ENCODE measurements at regions of chr1 and their contacts with region 1.

Region 1: DNA sequence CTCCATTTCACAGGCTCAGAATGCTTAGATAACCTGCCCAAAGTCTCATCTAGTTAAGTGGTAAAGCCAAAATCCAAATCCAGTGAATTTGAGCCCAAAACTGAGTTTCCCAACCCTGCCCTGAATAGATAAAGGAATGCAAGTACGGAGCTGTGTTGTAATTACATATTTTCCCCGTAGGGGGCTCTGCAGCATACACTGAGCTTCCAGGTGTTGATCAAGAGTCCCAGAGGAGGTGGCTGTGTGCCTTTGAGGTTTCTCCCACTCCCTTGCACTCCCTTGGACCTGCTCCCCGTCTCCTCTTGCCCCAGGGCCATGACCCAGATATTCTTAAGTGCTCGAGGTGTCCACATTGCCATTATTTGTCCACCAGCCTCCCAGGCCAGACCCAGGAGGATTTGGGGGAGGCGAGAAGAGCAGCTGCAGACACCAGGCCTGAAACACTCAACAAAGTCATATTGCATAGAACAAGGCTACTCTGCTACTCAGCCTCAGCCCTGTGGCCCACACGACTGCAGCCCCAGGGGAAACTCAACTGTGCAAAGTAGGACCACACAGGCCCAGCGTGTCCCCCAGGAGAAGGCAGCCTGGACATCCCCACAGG is 18.4 kb upstream of the LY9 start:
- DNase-seq: peak; percentile 72
- ATAC-seq: no peak
- H3K4me3 ChIP-seq: no peak overlapping the region
- H3K4me3 Mint-ChIP-seq: no peak overlapping the region
- H3K27ac ChIP-seq: no peak overlapping the region
- H3K27ac Mint-ChIP-seq: peak overlapping the region; percentile 76
- H3K4me1 ChIP-seq: peaks cover 45 to 58% of the 10 kb centered on the region in 2 donors
- H3K4me1 Mint-ChIP-seq: peaks cover 83% of the 10 kb centered on the region
- H3K27me3 ChIP-seq: no peaks in the 10 kb centered on the region
- H3K27me3 Mint-ChIP-seq: no peaks in the 10 kb centered on the region
- CTCF ChIP-seq: peak; percentile 72

Region 2: GRCh38 chr1:160681067-160681890 is 96.3 kb before region 1 on chr1:
- CTCF ChIA-PET with region 1: interaction called, 18 read pairs
- POLR2A ChIA-PET with region 1: no interaction called
- intact Hi-C with region 1: no loop called
- DNase-seq: peak; percentile 89
- ATAC-seq: peak; percentile 93
- H3K4me3 ChIP-seq: no peak overlapping the region
- H3K4me3 Mint-ChIP-seq: no peak overlapping the region
- H3K27ac ChIP-seq: peak overlapping the region in 1 of 2 donors; percentile 82
- H3K27ac Mint-ChIP-seq: peak overlapping the region; percentile 72
- H3K4me1 ChIP-seq: peaks cover 38 to 45% of the 10 kb centered on the region in 2 donors
- H3K4me1 Mint-ChIP-seq: peaks cover 51% of the 10 kb centered on the region
- H3K27me3 ChIP-seq: no peaks in the 10 kb centered on the region
- H3K27me3 Mint-ChIP-seq: no peaks in the 10 kb centered on the region
- CTCF ChIP-seq: peak; percentile 92

Region 3: DNA sequence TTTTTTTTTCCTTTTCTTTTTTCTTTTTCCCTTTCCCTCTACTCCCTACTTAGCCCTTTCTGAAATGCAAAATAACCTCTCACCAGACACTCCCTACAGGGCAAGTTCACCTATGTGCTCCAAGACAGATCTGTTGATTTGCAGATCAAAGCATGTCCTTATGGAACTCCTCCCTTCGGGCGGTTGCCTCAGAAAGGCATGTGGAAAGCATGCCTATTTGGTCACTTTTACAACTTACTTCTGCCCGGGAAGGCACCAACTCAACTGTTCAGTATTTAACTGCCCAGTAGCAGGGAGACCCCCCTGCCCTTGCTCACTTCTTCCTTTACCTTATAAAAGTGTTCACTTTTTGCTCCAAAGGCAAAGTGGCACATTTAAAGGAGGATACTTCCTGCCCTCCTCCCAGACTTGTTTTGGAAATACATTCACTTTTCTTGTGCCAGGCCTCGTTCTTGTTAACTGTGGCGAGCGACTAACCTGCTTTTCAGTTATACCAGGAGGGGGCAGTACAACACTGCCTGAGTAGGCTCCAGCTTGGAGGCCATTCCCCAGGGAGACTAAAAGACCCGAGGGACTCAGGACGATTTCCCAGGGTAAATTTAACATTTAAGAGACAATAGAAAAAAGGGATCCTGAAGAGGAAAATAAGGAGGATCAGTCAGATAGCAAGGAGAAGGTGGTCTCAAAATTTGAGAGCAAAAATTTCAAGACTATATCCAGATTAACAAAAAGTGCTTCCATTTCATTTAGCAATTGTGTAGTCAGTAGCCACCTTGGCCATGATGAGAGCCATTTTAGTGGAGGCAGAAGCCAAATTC is 50.9 kb before region 1 on chr1:
- CTCF ChIA-PET with region 1: interaction called, 68 read pairs
- POLR2A ChIA-PET with region 1: no interaction called
- intact Hi-C with region 1: loop called (anchors 2 kb)
- DNase-seq: peak; percentile 88
- ATAC-seq: peak; percentile 93
- H3K4me3 ChIP-seq: peak overlapping the region in 1 of 5 experiments; percentile 17
- H3K4me3 Mint-ChIP-seq: no peak overlapping the region
- H3K27ac ChIP-seq: no peak overlapping the region
- H3K27ac Mint-ChIP-seq: no peak overlapping the region
- H3K4me1 ChIP-seq: peaks cover 8 to 12% of the 10 kb centered on the region in 2 donors
- H3K4me1 Mint-ChIP-seq: peaks cover 10% of the 10 kb centered on the region
- H3K27me3 ChIP-seq: no peaks in the 10 kb centered on the region
- H3K27me3 Mint-ChIP-seq: no peaks in the 10 kb centered on the region
- CTCF ChIP-seq: peak; percentile 99

Region 4: GRCh38 chr1:160789702-160790611 is 12.4 kb after region 1 on chr1:
- CTCF ChIA-PET with region 1: interaction called, 150 read pairs
- POLR2A ChIA-PET with region 1: interaction called, 13 read pairs
- intact Hi-C with region 1: loop called (anchors 1 kb)
- DNase-seq: peak; percentile 98
- ATAC-seq: peak; percentile 77
- H3K4me3 ChIP-seq: peak overlapping the region in 1 of 5 experiments; percentile 19
- H3K4me3 Mint-ChIP-seq: peak overlapping the region; percentile 68
- H3K27ac ChIP-seq: peak overlapping the region; percentile 99
- H3K27ac Mint-ChIP-seq: peak overlapping the region; percentile 98
- H3K4me1 ChIP-seq: peaks cover 28 to 34% of the 10 kb centered on the region in 2 donors
- H3K4me1 Mint-ChIP-seq: peaks cover 42% of the 10 kb centered on the region
- H3K27me3 ChIP-seq: no peaks in the 10 kb centered on the region
- H3K27me3 Mint-ChIP-seq: no peaks in the 10 kb centered on the region
- CTCF ChIP-seq: no peak

Region 5: GRCh38 chr1:160806109-160806665 is 28.6 kb after region 1 on chr1:
- CTCF ChIA-PET with region 1: interaction called, 150 read pairs
- POLR2A ChIA-PET with region 1: interaction called, 7 read pairs
- intact Hi-C with region 1: loop called (anchors 5 kb)
- DNase-seq: no peak
- ATAC-seq: no peak
- H3K4me3 ChIP-seq: no peak overlapping the region
- H3K4me3 Mint-ChIP-seq: peak overlapping the region; percentile 74
- H3K27ac ChIP-seq: peak overlapping the region in 1 of 2 donors; percentile 20
- H3K27ac Mint-ChIP-seq: peak overlapping the region; percentile 60
- H3K4me1 ChIP-seq: peaks cover 9 to 13% of the 10 kb centered on the region in 2 donors
- H3K4me1 Mint-ChIP-seq: peaks cover 74% of the 10 kb centered on the region
- H3K27me3 ChIP-seq: no peaks in the 10 kb centered on the region
- H3K27me3 Mint-ChIP-seq: no peaks in the 10 kb centered on the region
- CTCF ChIP-seq: no peak

Region 6: DNA sequence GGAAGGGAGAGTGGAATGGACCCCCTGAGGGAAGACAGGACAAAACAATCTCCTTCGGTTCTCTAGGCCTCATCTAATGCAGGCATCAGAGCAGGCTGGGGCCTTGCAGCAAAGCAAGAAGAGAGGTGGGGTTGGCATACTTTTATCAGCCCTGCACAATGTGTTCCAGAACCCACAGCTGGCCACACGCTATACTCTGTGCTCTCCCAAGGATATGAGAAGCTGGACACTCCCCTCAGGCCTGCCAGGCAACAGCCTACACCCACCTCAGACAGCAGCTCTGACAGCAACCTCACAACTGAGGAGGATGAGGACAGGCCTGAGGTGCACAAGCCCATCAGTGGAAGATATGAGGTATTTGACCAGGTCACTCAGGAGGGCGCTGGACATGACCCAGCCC is 45.7 kb after region 1 on chr1:
- CTCF ChIA-PET with region 1: interaction called, 64 read pairs
- POLR2A ChIA-PET with region 1: no interaction called
- intact Hi-C with region 1: no loop called
- DNase-seq: no peak
- ATAC-seq: no peak
- H3K4me3 ChIP-seq: no peak overlapping the region
- H3K4me3 Mint-ChIP-seq: no peak overlapping the region
- H3K27ac ChIP-seq: no peak overlapping the region
- H3K27ac Mint-ChIP-seq: peak overlapping the region; percentile 68
- H3K4me1 ChIP-seq: no peaks in the 10 kb centered on the region
- H3K4me1 Mint-ChIP-seq: peaks cover 2% of the 10 kb centered on the region
- H3K27me3 ChIP-seq: no peaks in the 10 kb centered on the region
- H3K27me3 Mint-ChIP-seq: no peaks in the 10 kb centered on the region
- CTCF ChIP-seq: no peak

Region 7: DNA sequence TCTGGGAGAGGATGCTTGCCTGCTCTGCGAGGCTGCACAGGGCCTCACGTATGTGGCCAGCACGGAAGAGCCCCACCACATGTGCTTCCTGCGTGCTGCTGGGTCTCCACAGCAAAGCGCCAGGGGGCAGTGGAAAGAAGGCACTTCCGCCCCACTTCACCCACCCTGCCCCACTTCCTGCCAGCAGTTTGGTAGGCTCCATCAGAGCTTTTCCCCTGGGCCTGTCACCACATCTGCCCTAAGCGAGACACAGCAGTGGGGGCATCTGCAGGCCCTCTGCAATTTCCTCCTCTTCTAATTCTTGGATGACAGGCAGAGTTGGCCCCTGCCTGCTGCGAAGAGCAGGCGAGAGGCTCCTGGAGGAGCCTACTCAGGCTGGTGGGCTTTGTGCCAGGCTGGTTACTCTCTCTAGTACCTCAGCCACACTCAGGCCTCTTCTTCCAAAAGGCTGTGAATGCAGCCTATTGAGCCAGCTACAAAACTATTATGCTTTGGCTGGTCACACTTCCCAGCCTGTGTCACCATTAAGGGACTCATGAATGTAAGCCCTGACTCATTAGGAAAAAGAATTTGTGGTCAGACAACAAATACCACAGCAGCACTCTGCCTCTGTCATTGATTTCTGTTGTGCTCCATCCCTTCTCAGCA is 60.1 kb after region 1 on chr1:
- CTCF ChIA-PET with region 1: interaction called, 30 read pairs
- POLR2A ChIA-PET with region 1: no interaction called
- intact Hi-C with region 1: no loop called
- DNase-seq: peak; percentile 91
- ATAC-seq: peak; percentile 97
- H3K4me3 ChIP-seq: peak overlapping the region in 1 of 5 experiments; percentile 30
- H3K4me3 Mint-ChIP-seq: peak overlapping the region; percentile 41
- H3K27ac ChIP-seq: peak overlapping the region; percentile 71 to 72
- H3K27ac Mint-ChIP-seq: peak overlapping the region; percentile 90
- H3K4me1 ChIP-seq: peaks cover 33 to 34% of the 10 kb centered on the region in 2 donors
- H3K4me1 Mint-ChIP-seq: peaks cover 41% of the 10 kb centered on the region
- H3K27me3 ChIP-seq: no peaks in the 10 kb centered on the region
- H3K27me3 Mint-ChIP-seq: no peaks in the 10 kb centered on the region
- CTCF ChIP-seq: peak; percentile 65

Measured in B cell (primary cell).